Activated naive CD4-positive, alpha-beta T cell treated with anti-CD3 and anti-CD28 coated beads for 36 hours (primary cell): ENCODE measurements at regions of chr10 and their contacts with region 1.

Region 1: GRCh38 chr10:29443745-29444523 is 155.1 kb downstream of the LYZL1 start:
- DNase-seq: peak; percentile 35
- H3K4me3 Mint-ChIP-seq: no peak overlapping the region
- H3K27ac Mint-ChIP-seq: no peak overlapping the region
- H3K4me1 Mint-ChIP-seq: peaks cover 14% of the 10 kb centered on the region
- H3K27me3 Mint-ChIP-seq: no peaks in the 10 kb centered on the region

Region 2: DNA sequence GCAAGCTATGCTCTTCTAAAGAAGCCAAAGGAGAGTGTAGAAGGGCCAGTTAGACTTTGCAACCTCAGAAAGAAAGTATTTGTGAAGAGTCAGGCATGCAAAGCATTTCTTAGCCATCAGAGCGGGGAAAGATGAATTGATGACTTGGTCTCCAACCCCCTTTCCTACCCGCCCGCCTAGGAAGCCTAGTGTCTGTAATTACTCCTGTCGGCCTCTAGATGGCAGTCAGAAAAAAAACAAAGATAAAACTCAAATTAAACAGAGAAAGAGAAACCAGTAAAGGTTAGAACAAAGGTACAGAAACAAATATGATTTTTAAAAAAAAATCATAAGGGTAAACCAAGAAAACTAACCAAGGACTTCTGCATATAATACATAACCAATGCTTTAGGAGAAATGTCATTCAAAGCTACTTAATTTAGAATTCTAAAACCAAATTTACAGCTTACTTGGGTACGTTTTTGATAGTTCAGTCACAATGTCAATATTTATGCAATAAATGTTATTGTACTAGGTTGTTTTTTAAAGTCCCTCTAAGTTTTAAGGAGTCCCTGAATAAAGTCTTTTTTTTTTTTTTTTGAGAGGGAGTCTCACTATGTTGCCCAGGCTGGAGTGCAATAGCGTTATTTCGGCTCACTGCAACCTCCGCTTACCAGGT is 57.5 kb before region 1 on chr10:
- CTCF ChIA-PET with region 1: interaction called, 45 read pairs
- intact Hi-C with region 1: loop called (anchors 1 kb)
- DNase-seq: peak; percentile 11
- H3K4me3 Mint-ChIP-seq: no peak overlapping the region
- H3K27ac Mint-ChIP-seq: no peak overlapping the region
- H3K4me1 Mint-ChIP-seq: no peaks in the 10 kb centered on the region
- H3K27me3 Mint-ChIP-seq: peaks cover 4% of the 10 kb centered on the region

Region 3: GRCh38 chr10:29426420-29426819 is 17.5 kb before region 1 on chr10:
- CTCF ChIA-PET with region 1: interaction called, 8 read pairs
- intact Hi-C with region 1: loop called (anchors 2 kb)
- DNase-seq: no peak
- H3K4me3 Mint-ChIP-seq: no peak overlapping the region
- H3K27ac Mint-ChIP-seq: no peak overlapping the region
- H3K4me1 Mint-ChIP-seq: peaks cover 3% of the 10 kb centered on the region
- H3K27me3 Mint-ChIP-seq: no peaks in the 10 kb centered on the region

Region 4: GRCh38 chr10:29590915-29591650 is 147.1 kb after region 1 on chr10:
- CTCF ChIA-PET with region 1: no interaction called
- intact Hi-C with region 1: loop called (anchors 2 kb)
- DNase-seq: no peak
- H3K4me3 Mint-ChIP-seq: no peak overlapping the region
- H3K27ac Mint-ChIP-seq: no peak overlapping the region
- H3K4me1 Mint-ChIP-seq: peaks cover 8% of the 10 kb centered on the region
- H3K27me3 Mint-ChIP-seq: no peaks in the 10 kb centered on the region

Region 5: GRCh38 chr10:29811751-29812449 is 368.0 kb after region 1 on chr10:
- CTCF ChIA-PET with region 1: no interaction called
- intact Hi-C with region 1: no loop called
- DNase-seq: peak; percentile 63
- H3K4me3 Mint-ChIP-seq: no peak overlapping the region
- H3K27ac Mint-ChIP-seq: no peak overlapping the region
- H3K4me1 Mint-ChIP-seq: peaks cover 27% of the 10 kb centered on the region
- H3K27me3 Mint-ChIP-seq: peaks cover 14% of the 10 kb centered on the region